Sciatic nerve (tissue), 2 donors: ENCODE measurements at regions of chr2 and their contacts with region 1.

Region 1: GRCh38 chr2:62527478-62528210 is 21.6 kb upstream of the TMEM17 start:
- DNase-seq: no peak
- ATAC-seq: no peak

Region 2: DNA sequence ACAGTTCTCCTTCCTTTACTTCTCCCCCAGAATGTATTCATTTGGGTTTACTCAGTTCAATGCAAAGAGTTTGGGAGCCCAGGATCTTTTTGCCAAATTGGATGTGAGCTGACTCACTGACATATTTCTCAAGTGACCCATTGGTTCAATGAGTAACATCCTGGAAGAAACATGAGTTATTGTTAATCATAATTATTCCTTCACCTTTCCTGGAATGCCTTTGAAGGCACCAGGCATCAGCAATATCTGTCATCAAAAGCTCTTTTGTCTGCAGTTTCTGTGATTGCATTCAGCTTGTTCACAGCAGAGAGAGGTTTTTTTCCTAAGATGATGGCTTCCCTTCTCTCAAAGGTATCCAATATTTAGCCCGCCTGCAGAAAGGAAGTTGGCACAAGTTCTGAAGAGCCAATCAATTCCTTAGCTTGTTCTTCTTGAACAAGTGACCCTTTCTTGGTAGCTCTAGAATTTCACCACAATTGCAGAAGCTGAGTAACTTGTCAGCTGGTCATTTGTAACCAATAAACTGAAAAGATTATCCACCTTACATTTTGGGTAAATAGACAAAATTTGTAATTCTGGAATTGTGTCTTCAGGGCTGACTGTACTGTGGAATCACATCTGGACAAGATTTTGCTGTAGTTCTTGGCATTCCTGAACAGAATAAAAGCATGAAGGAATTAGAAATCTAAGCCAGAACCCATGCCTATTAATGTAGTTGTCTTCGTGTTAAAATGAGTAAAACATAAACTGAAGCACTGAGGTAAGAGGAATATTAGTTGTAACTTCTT is 50.5 kb after region 1 on chr2:
- intact Hi-C with region 1: loop called (anchors 2 kb)
- DNase-seq: no peak
- ATAC-seq: peak; percentile 31